H1 (cell line): ENCODE measurements at regions of chr19 and their contacts with region 1.

Region 1: GRCh38 chr19:12092065-12092867 is 27.7 kb downstream of the ZNF844 start:
- DNase-seq: peak; percentile 81 to 93
- H3K4me3 ChIP-seq: peak overlapping the region; percentile 62 to 93 (median 76)
- H3K27ac ChIP-seq: peak overlapping the region; percentile 90
- H3K4me1 ChIP-seq: no peaks in the 10 kb centered on the region; a peak in 1 of 7 replicates
- H3K27me3 ChIP-seq: no peaks in the 10 kb centered on the region
- CTCF ChIP-seq: no peak
- EP300 ChIP-seq: no peak
- POLR2A ChIP-seq: peak; percentile 74 to 95
- RAD21 ChIP-seq: no peak

Region 2: DNA sequence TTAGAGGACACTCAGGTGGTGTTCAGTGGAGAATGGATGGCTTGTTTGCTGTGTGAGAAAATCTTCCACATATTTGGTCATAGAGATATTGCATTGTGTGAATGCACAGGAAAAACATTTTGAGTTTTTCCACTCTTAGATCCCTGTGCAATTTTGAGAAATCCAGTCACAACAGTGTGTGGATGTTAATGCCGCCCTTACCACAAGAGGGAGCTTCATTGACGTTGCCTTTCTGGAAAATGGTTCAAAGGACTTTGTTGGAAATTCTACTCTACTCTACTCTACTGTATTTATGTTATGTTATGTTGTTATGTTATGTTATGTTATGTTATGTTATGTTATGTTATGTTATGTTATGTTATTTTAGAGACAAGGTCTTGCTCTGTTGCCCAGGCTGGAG is 34.4 kb after region 1 on chr19:
- CTCF ChIA-PET with region 1: interaction called, 21 read pairs
- POLR2A ChIA-PET with region 1: interaction called, 7 read pairs
- DNase-seq: peak in 1 of 2 experiments; percentile 54
- H3K4me3 ChIP-seq: no peak overlapping the region
- H3K27ac ChIP-seq: no peak overlapping the region
- H3K4me1 ChIP-seq: no peaks in the 10 kb centered on the region
- H3K27me3 ChIP-seq: no peaks in the 10 kb centered on the region
- CTCF ChIP-seq: peak in 2 of 3 experiments; percentile 45 to 68; a peak in 2 of 4 replicates
- EP300 ChIP-seq: no peak
- POLR2A ChIP-seq: no peak
- RAD21 ChIP-seq: peak; percentile 19 to 39

Region 3: GRCh38 chr19:12156223-12157058 is 64.2 kb after region 1 on chr19 and contains the start of gene ZNF625:
- CTCF ChIA-PET with region 1: interaction called, 10 read pairs
- POLR2A ChIA-PET with region 1: interaction called, 3 read pairs
- DNase-seq: peak; percentile 85 to 95
- H3K4me3 ChIP-seq: peak within 1 kb of the TSS; percentile 77 to 93 (median 82)
- H3K27ac ChIP-seq: peak within 1 kb of the TSS; percentile 93
- H3K4me1 ChIP-seq: peaks cover 0 to 3% (median 2%) of the 10 kb centered on the region in 4 experiments; a peak in 3 of 7 replicates
- H3K27me3 ChIP-seq: no peaks in the 10 kb centered on the region
- CTCF ChIP-seq: no peak
- EP300 ChIP-seq: no peak
- POLR2A ChIP-seq: peak; percentile 93 to 98
- RAD21 ChIP-seq: no peak
- total RNA-seq, gene ZNF625: 23.3 and 26.8 TPM in 2 replicates